ENCODE measurements at regions of chr16 and their contacts with region 1.

Region 1: DNA sequence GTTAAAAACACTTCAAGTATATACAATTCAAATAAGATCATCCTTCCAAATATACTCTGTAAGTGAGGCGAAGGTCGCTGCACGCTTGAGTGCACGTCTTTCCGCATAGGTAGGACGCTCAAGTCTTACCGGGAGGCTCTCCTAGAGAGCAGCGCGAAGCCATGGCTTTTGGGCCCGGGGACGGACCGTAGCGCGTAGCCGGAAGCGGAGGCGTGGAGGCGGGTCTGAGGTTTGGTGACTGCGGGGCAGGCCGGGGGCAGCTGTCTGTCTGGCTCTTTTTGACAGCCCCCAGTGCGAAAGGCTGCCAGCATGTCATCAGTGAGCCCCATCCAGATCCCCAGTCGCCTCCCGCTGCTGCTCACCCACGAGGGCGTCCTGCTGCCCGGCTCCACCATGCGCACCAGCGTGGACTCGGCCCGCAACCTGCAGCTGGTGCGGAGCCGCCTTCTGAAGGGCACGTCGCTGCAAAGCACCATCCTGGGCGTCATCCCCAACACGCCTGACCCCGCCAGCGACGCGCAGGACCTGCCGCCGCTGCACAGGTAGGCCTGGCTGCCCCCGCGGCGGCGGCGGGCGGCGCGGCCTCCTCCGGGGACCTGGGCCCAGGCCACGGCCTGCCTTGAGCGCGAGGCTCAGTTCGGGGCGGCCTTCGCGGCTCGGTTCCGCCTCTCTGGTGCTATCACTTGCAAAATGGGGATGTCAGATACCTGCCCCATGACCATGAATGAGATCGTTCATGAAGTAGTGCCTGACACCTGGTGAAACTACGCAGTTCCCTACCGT is at the start of gene LONP2:
- DNase-seq: peak; percentile 75
- ATAC-seq: peak; percentile 95
- H3K4me3 ChIP-seq: peak within 1 kb of the TSS; percentile 92
- H3K27ac ChIP-seq: peak within 1 kb of the TSS; percentile 80
- H3K4me1 ChIP-seq: no peaks in the 10 kb centered on the region
- H3K27me3 ChIP-seq: no peaks in the 10 kb centered on the region
- CTCF ChIP-seq: no peak
- EP300 ChIP-seq: no peak
- POLR2A ChIP-seq: peak; percentile 91
- RAD21 ChIP-seq: no peak
- polyA plus RNA-seq, gene LONP2: 8.3 to 10.1 TPM

Region 2: DNA sequence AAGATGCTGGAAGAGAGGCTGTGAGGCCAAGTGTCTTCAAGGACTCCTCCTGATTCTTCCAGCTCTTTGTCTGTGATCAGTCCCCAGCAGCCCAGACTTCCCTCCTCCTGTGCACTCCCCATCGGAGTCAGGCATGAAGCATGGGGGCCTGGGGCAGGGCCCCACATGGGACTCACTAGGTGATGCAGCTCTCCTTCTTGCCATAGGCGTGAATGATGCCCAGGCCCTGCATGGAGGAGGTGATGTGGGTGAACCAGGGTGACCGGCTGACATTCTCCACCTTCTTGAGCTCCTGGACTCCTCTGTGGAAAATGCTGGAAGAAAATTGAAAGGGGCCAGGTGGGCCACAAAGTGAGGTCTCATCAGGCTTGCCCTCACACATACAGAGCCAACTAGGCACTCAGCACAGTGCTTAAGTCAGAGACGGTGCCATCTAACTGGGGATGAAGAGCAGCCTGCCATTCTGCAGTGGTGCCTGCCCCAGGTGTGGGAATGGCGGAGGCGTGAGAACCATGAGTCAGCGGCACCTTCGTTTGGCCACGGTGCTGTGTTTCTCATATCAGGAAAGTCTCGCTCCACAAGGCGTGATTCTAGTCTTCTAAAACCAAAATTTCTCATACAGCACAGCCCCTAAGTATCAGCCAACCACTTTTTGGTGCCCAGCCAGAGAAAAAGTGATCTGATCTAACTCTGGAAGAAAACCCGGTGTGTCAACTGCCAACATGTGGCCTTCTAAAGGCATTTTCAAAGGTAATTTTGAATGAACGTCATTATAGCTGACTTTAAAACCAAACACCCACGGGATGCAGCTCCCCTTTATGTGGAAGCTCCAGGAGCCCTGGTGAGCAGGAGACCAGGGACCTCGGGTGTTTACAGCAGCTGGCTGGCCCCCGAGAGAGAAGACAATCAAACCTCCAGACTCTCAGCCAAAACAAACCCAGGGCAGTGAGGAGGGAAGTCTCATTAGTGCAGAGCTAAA is 143.3 kb before region 1 on chr16:
- CTCF ChIA-PET with region 1: no interaction called
- POLR2A ChIA-PET with region 1: no interaction called
- RAD21 ChIA-PET with region 1: no interaction called
- SMC1A ChIA-PET with region 1: no interaction called
- in situ Hi-C with region 1: no loop called
- intact Hi-C with region 1: loop called (anchors 5 kb)
- DNase-seq: peak; percentile 74
- ATAC-seq: peak; percentile 80
- H3K4me3 ChIP-seq: no peak overlapping the region
- H3K27ac ChIP-seq: peak overlapping the region; percentile 33
- H3K4me1 ChIP-seq: peaks cover 25% of the 10 kb centered on the region
- H3K27me3 ChIP-seq: no peaks in the 10 kb centered on the region
- CTCF ChIP-seq: no peak
- EP300 ChIP-seq: peak in 1 of 2 experiments; percentile 83; a peak in 2 of 4 replicates
- POLR2A ChIP-seq: no peak
- RAD21 ChIP-seq: no peak

Region 3: DNA sequence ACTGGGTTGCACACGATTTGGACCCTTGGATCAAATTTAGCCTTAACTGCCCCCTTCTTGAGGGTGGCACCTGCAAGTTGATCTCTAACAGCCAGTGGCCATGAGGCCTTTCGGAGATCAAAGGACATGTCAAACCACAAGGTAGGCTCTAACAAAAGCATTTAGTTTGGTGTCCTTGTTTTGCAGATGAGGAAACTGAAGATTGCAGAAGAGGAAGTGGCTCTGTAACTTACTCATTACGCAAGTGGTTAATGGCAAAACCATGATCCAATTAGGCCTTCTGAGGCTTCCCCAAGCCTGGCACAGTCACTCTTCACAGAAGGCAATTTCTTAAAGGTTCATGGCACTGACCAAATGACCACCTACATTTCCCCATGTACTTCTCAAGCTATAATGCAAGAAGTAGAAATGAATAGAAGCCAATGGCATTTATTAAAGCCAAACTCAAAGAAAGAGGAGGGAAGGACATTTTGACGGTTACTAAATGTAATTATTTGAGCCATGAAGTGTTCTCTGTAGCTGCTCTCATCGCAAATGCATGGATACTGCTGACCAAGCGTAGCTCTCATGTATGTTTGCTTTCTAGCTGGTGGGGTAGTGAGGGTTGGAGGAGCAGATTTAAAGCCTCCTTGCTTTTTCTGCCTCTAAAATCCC is 55.7 kb before region 1 on chr16:
- CTCF ChIA-PET with region 1: no interaction called
- POLR2A ChIA-PET with region 1: no interaction called
- RAD21 ChIA-PET with region 1: no interaction called
- SMC1A ChIA-PET with region 1: no interaction called
- in situ Hi-C with region 1: no loop called
- intact Hi-C with region 1: loop called (anchors 1 kb)
- DNase-seq: peak; percentile 89
- ATAC-seq: peak; percentile 95
- H3K4me3 ChIP-seq: no peak overlapping the region
- H3K27ac ChIP-seq: no peak overlapping the region
- H3K4me1 ChIP-seq: no peaks in the 10 kb centered on the region; the same call in 1 of the 2 replicates
- H3K27me3 ChIP-seq: no peaks in the 10 kb centered on the region
- CTCF ChIP-seq: no peak
- EP300 ChIP-seq: peak; percentile 54 to 96; a peak in 3 of 4 replicates
- POLR2A ChIP-seq: no peak
- RAD21 ChIP-seq: no peak

Measured in GM12878 (cell line).